Heart right ventricle (tissue), 16 donors: ENCODE measurements at regions of chr3 and their contacts with region 1.

Region 1: DNA sequence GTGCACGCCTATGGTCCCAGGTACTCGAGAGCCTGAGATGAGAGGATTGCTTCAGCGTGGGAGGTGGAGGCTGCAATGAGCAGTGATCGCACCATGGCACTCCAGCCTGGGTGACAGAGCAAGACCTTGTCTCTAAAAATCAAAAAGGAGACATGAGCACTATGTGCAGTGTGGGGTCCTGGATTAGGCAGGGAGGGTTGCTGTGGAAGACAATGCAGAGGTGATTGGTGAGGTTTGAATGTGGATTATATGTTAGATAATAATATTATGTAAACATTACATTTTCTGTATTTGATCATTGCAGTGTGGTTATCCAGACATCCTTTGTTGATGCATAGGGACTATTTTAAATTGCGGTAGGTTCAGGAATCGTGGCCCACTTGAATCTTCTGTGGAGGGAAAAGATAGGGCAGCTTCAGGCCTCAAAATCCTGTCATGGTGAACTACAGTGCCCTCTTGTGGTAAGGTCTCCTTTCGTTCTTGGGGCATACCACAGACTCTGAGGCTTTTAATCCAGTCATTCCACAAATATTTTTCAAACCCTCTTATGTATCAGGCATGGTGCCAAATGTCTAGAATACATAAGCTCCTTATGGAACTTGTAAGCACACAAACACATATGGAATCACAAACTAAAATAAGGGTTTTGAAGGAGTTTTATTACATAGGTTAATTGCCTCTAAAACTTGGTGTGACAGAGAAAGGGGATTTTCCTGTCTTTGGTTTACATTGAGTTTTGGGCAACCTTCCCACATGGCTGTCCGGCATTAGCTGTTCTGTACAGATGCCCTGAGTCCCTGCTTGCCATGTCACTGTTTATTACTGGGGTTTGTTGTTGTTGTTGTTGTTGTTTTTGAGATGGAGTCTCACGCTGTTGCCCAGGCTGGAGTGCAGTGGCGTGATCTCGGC is 37.7 kb downstream of the GPD1L start:
- DNase-seq: peak in 1 of 2 donors; percentile 71
- ATAC-seq: peak; percentile 61 to 87 (median 80)
- H3K4me3 ChIP-seq: no peak overlapping the region
- H3K27ac ChIP-seq: no peak overlapping the region
- H3K4me1 ChIP-seq: peaks cover 0 to 43% (median 11%) of the 10 kb centered on the region in 9 donors
- H3K27me3 ChIP-seq: no peaks in the 10 kb centered on the region
- CTCF ChIP-seq: peak; percentile 55 to 90 (median 85)

Region 2: GRCh38 chr3:32018757-32019564 is 125.1 kb before region 1 on chr3:
- intact Hi-C with region 1: loop called (anchors 1 to 5 kb)
- DNase-seq: peak in 1 of 2 donors; percentile 18
- ATAC-seq: peak in 6 of 8 donors; percentile 66 to 89 (median 79)
- H3K4me3 ChIP-seq: no peak overlapping the region
- H3K27ac ChIP-seq: no peak overlapping the region
- H3K4me1 ChIP-seq: no peaks in the 10 kb centered on the region
- H3K27me3 ChIP-seq: no peaks in the 10 kb centered on the region
- CTCF ChIP-seq: peak; percentile 60 to 83 (median 76)